Breast epithelium (tissue), 4 donors: ENCODE measurements at regions of chr20 and their contacts with region 1.

Region 1: GRCh38 chr20:31984981-31985471 is 17.1 kb downstream of the XKR7 start:
- DNase-seq: no peak
- H3K4me3 ChIP-seq: no peak overlapping the region
- H3K27ac ChIP-seq: no peak overlapping the region
- H3K4me1 ChIP-seq: no peaks in the 10 kb centered on the region
- H3K27me3 ChIP-seq: peaks cover 0 to 5% of the 10 kb centered on the region in 2 donors
- CTCF ChIP-seq: no peak
- POLR2A ChIP-seq: no peak

Region 2: DNA sequence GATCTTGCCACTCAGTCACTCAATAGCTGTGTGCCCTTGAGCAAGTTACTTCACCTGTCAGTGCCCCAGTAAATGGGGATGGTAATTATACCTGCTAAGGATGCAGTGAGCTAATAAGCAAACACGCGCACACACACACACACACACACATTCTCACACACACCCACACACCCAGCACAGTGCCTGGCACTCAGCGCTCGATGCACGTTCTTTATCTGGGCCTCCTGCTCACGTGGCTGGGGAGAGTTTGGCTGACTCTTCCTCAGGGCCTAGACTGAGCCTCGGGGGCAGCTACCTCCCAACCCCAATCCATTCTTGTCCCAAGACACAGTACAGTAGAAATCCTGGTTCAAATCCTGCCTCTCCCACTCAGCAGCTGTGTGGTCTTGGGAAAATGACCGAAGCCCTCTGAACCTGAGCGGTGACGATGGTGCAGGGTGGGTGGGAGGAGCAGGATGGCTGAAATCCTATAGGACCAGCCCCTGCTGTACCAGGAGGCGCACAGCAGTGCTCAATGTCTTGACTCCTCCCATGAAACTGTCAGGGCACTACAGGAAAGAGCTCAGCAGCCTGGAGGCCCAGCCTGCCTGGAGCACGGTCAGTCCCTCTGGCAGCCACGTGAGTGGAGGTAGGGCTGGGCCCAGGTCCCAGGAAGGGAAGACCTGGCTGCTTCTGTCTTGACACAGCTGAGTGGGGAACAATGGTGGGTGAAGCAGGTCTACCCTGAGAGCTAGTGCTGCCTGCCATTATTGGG is 64.7 kb before region 1 on chr20:
- intact Hi-C with region 1: no loop called
- DNase-seq: no peak
- H3K4me3 ChIP-seq: no peak overlapping the region
- H3K27ac ChIP-seq: no peak overlapping the region
- H3K4me1 ChIP-seq: no peaks in the 10 kb centered on the region
- H3K27me3 ChIP-seq: no peaks in the 10 kb centered on the region
- CTCF ChIP-seq: no peak
- POLR2A ChIP-seq: no peak

Region 3: DNA sequence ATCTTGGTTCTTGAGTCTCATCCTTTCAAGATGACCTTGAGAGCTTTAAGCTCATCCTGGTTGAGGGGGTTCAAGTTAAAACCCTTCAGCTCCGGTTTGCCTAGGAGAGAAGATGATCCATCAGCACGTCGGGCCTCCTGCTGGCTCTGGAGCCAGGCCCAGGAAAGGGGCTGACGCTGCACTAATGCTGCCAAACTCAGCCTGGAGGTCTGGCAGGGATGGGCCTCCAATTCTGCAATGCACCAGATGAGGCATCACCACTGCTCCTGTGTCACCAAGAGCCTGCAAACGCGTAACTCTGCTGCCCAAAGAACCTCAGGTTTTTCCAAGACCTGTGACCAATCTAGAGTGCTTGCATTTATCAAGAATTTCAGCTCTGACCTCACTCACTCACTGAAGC is 39.2 kb before region 1 on chr20:
- intact Hi-C with region 1: loop called (anchors 1 kb)
- DNase-seq: no peak
- H3K4me3 ChIP-seq: no peak overlapping the region
- H3K27ac ChIP-seq: no peak overlapping the region
- H3K4me1 ChIP-seq: peaks cover 5 to 8% of the 10 kb centered on the region in 2 donors
- H3K27me3 ChIP-seq: no peaks in the 10 kb centered on the region
- CTCF ChIP-seq: no peak
- POLR2A ChIP-seq: no peak

Region 4: DNA sequence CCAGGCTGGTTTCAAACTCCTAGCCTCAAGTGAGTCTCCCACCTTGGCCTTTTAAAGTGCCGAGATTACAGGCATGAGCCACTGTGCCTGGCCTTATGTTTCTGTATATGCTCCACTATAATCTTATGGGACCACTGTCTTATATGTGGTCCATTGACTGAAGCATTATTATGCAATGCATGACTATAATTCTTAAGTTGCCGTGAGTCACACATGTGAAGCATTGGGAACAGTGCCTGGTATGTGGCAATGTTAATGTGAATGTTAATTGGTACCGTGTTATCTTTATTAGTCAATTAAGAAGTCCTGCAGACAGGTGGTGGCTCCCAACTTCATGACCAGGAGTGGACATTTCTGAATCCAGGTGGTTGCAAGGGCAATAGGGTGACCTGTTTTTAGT is 358.4 kb after region 1 on chr20:
- intact Hi-C with region 1: no loop called
- DNase-seq: no peak
- H3K4me3 ChIP-seq: no peak overlapping the region
- H3K27ac ChIP-seq: no peak overlapping the region
- H3K4me1 ChIP-seq: no peaks in the 10 kb centered on the region
- H3K27me3 ChIP-seq: no peaks in the 10 kb centered on the region
- CTCF ChIP-seq: no peak
- POLR2A ChIP-seq: no peak